ENCODE measurements at regions of chr18 and their contacts with region 1.

Region 1: GRCh38 chr18:57434536-57435494 is at the start of gene ONECUT2:
- DNase-seq: peak; percentile 99
- H3K4me3 ChIP-seq: peak within 1 kb of the TSS; percentile 69 to 73
- H3K27ac ChIP-seq: peak within 1 kb of the TSS in 1 of 2 experiments; percentile 53; a peak in 2 of 4 replicates
- H3K4me1 ChIP-seq: peaks cover 0 to 24% of the 10 kb centered on the region in 2 experiments; a peak in 1 of 4 replicates
- H3K27me3 ChIP-seq: peaks cover 39% of the 10 kb centered on the region; the same call in 1 of the 2 replicates
- CTCF ChIP-seq: no peak
- EP300 ChIP-seq: no peak
- RAD21 ChIP-seq: no peak
- polyA plus RNA-seq, gene ONECUT2: 0.10 and 0.16 TPM in 2 replicates

Region 2: GRCh38 chr18:56869189-56869777 is 565.5 kb before region 1 on chr18:
- CTCF ChIA-PET with region 1: interaction called, 72 read pairs
- POLR2A ChIA-PET with region 1: interaction called, 3 read pairs
- DNase-seq: peak; percentile 33
- H3K4me3 ChIP-seq: no peak overlapping the region
- H3K27ac ChIP-seq: no peak overlapping the region
- H3K4me1 ChIP-seq: peaks cover 0 to 4% of the 10 kb centered on the region in 2 experiments; a peak in 1 of 4 replicates
- H3K27me3 ChIP-seq: no peaks in the 10 kb centered on the region
- CTCF ChIP-seq: peak; percentile 89
- EP300 ChIP-seq: no peak
- RAD21 ChIP-seq: peak; percentile 88

Region 3: DNA sequence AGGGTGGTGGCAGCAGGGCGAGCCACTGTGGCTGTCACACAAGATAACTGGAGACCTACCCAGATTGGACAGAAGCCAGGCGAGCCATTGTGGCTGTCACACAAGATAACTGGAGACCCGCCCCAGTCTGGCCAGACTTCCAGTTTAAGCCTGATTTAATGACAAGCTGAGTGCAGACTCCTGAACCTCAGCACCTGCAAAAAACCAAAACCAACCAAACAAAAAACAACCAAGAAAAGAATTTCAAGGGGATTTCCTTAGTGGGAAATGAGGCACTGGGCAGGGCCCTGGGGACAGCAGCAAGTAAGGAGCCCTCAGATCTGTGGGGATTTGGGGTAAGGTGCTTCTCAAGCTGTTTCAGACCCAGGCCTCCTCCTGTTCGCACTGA is 383.2 kb before region 1 on chr18:
- CTCF ChIA-PET with region 1: interaction called, 11 read pairs
- POLR2A ChIA-PET with region 1: no interaction called
- DNase-seq: peak; percentile 67
- H3K4me3 ChIP-seq: no peak overlapping the region
- H3K27ac ChIP-seq: no peak overlapping the region; a peak in 1 of 4 replicates
- H3K4me1 ChIP-seq: peaks cover 0 to 30% of the 10 kb centered on the region in 2 experiments; a peak in 2 of 4 replicates
- H3K27me3 ChIP-seq: no peaks in the 10 kb centered on the region
- CTCF ChIP-seq: no peak
- EP300 ChIP-seq: peak in 1 of 2 experiments; percentile 44; a peak in 1 of 4 replicates
- RAD21 ChIP-seq: no peak; the same call in 1 of the 2 replicates

Region 4: DNA sequence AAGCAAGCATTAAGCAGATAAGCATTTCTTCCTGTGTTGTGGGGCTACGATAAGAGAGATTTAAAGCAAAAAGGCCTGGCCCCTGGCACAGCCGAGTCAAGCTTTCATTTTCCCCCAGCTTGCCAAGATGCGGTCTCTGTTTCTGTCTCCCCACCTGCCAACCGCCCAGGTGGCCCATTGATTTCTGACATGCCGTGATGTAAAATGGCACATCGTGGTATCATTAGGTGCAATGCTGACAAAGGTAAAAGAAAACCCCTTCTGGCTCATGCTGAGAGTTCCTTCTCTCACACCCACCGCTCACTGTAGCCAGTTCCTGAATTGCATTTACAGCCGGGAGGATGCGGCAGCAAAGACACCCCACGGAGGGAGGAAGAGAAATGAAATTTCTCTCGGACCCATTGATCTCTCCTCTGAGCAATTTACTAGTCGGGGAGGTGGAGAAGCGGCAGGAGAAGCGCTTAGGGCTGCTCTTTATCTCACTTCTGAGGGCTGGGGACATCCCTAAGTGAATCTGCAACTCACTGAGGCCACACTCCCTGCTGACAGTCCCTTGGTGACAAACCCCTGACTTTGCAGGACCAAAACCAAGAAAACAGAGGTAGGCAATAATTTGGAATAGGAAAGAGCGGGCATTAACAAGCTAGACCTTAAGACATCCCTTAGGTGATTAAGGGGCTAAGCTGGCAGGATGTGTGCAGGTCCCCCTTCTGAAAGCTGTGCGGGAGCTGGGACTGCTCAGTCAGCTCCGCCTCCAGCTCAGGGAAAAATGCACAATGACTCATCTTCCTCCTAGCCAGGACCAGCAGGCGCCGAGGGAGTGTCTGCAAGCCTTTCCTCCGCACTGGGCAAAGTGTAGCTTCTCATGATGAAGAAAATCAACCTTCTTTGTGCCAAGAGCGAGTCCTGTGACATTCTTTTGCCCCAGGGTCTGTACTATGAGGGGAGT is 224.8 kb before region 1 on chr18:
- CTCF ChIA-PET with region 1: no interaction called
- POLR2A ChIA-PET with region 1: no interaction called
- DNase-seq: no peak
- H3K4me3 ChIP-seq: no peak overlapping the region
- H3K27ac ChIP-seq: no peak overlapping the region
- H3K4me1 ChIP-seq: peaks cover 0 to 6% of the 10 kb centered on the region in 2 experiments; a peak in 2 of 4 replicates
- H3K27me3 ChIP-seq: no peaks in the 10 kb centered on the region; the same call in 1 of the 2 replicates
- CTCF ChIP-seq: no peak
- EP300 ChIP-seq: no peak
- RAD21 ChIP-seq: no peak

Region 5: DNA sequence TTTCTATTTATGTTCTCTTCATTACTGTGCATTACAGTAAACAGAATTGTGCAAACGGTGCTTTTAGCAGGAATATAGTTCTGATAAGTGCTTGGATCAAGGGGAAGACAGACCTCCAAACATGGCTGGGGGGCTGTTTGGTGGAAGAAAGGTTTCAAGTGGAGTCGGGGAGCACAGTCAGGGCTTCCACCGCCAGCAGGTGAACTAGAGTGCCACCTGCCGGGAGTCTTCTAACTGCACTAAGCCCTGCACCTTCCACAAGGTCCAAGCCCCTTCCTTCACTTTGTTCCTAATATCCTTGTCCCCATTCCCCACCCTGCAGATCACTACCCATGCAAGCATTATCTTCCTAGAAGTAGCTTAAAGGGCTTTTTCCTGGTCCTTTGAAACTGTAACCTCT is 11.5 kb after region 1 on chr18:
- CTCF ChIA-PET with region 1: interaction called, 11 read pairs
- POLR2A ChIA-PET with region 1: no interaction called
- DNase-seq: no peak
- H3K4me3 ChIP-seq: no peak overlapping the region
- H3K27ac ChIP-seq: no peak overlapping the region; a peak in 1 of 4 replicates
- H3K4me1 ChIP-seq: peaks cover 0 to 8% of the 10 kb centered on the region in 2 experiments; a peak in 2 of 4 replicates
- H3K27me3 ChIP-seq: no peaks in the 10 kb centered on the region
- CTCF ChIP-seq: peak; percentile 51
- EP300 ChIP-seq: no peak
- RAD21 ChIP-seq: peak; percentile 36